ENCODE measurements at regions of chr22 and their contacts with region 1.

Region 1: DNA sequence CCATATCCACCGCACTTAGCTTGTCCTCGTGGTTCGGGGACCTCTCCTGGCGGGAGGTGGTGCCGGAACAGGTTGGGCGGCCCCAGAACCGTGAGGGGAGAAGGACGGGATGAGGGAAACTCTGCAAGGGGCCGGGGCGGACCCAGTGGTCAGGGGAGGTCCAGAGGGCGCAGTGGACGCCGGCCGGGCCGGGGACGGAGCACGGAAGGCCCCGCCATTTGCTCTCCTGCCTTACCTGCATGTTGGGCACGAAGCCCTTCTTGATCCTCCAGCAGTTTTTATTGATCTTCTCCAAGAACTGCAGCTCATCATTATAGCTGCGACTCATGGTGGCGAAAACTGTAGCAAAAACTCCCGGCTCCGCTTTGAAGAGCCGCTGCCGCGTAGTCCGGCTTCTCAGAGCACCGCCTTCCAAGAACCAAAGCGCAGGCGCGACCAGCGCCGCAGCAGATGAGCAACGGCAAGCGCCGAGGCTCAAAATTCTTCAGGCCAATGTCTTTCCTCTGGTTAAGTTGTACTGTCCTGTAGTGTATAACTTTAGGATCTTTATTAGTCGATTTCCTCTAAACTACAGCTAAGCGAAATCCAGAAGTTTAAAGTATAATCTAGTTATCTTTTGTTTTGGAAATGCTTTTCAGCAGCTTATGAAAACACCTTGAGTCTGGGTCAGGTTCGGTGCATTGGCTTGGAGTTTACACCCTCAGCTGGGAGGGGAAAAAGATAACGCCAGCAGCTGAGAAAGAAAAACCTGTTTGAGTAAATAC is at the start of gene RTCB:
- DNase-seq: peak; percentile 93
- ATAC-seq: peak; percentile 89
- H3K4me3 Mint-ChIP-seq: peak within 1 kb of the TSS; percentile 88
- H3K27ac Mint-ChIP-seq: peak within 1 kb of the TSS; percentile 91
- H3K4me1 Mint-ChIP-seq: peaks cover 51% of the 10 kb centered on the region
- H3K27me3 Mint-ChIP-seq: peaks cover 11% of the 10 kb centered on the region
- total RNA-seq, gene RTCB: 77.2 to 85.5 TPM

Region 2: GRCh38 chr22:32401486-32401885 is 10.5 kb before region 1 on chr22:
- CTCF ChIA-PET with region 1: interaction called, 11 read pairs
- DNase-seq: no peak
- ATAC-seq: no peak
- H3K4me3 Mint-ChIP-seq: no peak overlapping the region
- H3K27ac Mint-ChIP-seq: peak overlapping the region; percentile 8
- H3K4me1 Mint-ChIP-seq: peaks cover 7% of the 10 kb centered on the region
- H3K27me3 Mint-ChIP-seq: no peaks in the 10 kb centered on the region

Region 3: GRCh38 chr22:32579509-32580234 is 167.7 kb after region 1 on chr22:
- CTCF ChIA-PET with region 1: no interaction called
- DNase-seq: no peak
- ATAC-seq: no peak
- H3K4me3 Mint-ChIP-seq: no peak overlapping the region
- H3K27ac Mint-ChIP-seq: no peak overlapping the region
- H3K4me1 Mint-ChIP-seq: peaks cover 5% of the 10 kb centered on the region
- H3K27me3 Mint-ChIP-seq: peaks cover 15% of the 10 kb centered on the region

Measured in activated CD8-positive, alpha-beta memory T cell treated with anti-CD3 and anti-CD28 coated beads, Interleukin-2, amount 10 ng/mL, durations not matched to agents 7 days and 5 days (primary cell).